MCF 10A (cell line): ENCODE measurements at regions of chr12 and their contacts with region 1.

Region 1: DNA sequence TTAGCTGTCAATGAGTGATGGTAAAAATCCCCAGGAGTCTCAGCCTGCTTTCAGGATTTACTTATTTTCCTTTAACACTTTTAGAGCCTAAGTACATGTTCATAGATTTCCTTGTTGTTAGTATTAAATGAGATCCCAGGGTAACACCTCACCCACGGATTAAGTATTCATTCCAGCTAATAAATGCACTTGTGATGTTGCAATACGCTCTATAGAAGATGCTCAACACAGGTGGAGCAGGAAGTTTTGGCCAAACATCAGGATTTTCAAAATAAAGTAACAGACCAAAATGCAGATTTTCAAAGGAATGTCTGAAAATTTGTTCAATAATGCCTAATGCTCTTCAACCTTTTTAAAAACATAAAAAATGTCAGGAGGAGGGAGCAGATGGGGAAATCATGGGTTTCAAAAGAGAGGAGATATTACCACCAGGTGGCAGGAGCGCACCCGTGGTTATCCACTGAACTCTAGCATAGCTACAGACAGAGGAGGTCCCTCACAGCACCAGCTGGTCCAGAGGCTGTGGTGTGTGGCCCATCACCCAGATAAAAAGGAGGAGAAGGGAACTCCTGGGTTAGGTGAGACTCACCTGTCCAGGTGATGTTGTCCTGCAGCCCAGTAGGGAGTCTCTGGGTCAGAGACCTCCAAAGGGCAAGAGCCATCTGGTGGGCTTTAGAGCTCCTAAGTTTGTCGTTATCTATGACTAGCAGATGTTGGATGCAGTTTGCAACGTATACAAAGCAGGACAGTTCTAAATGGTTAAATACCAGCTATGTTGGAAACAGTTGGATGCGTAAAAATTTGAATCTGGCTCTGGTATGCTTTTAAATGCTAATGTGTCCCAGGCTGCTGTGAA is 1158.4 kb upstream of the TMEM132C start:
- DNase-seq: peak; percentile 81
- H3K4me3 Mint-ChIP-seq: no peak overlapping the region
- H3K27ac Mint-ChIP-seq: peak overlapping the region; percentile 59
- H3K4me1 Mint-ChIP-seq: peaks cover 22% of the 10 kb centered on the region
- H3K27me3 Mint-ChIP-seq: no peaks in the 10 kb centered on the region
- CTCF ChIP-seq: peak; percentile 75

Region 2: GRCh38 chr12:127119600-127120140 is 11.1 kb after region 1 on chr12:
- CTCF ChIA-PET with region 1: interaction called, 32 read pairs
- POLR2A ChIA-PET with region 1: no interaction called
- intact Hi-C with region 1: no loop called
- DNase-seq: no peak
- H3K4me3 Mint-ChIP-seq: no peak overlapping the region
- H3K27ac Mint-ChIP-seq: no peak overlapping the region
- H3K4me1 Mint-ChIP-seq: peaks cover 22% of the 10 kb centered on the region
- H3K27me3 Mint-ChIP-seq: no peaks in the 10 kb centered on the region
- CTCF ChIP-seq: no peak

Region 3: DNA sequence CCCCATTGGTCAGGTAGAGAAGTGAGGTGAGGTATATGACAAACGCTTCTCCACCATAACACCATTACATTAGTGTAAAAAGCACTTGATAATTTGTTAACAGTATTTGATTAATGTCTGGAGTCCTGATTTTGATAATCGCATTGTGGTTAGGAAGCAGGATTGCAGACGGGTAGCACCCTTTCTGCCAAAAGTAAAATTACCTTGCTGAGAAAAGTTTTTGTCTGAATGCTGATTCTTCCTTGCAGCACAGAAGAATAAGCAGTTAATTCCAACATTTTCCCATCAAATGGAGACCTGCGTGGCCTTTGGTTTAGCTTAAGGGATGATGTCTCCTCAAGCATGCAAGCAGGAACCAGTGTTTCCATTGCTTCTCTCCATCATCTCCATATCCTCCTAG is 68.2 kb after region 1 on chr12:
- CTCF ChIA-PET with region 1: no interaction called
- POLR2A ChIA-PET with region 1: no interaction called
- intact Hi-C with region 1: no loop called
- DNase-seq: no peak
- H3K4me3 Mint-ChIP-seq: no peak overlapping the region
- H3K27ac Mint-ChIP-seq: no peak overlapping the region
- H3K4me1 Mint-ChIP-seq: peaks cover 5% of the 10 kb centered on the region
- H3K27me3 Mint-ChIP-seq: no peaks in the 10 kb centered on the region
- CTCF ChIP-seq: no peak

Region 4: GRCh38 chr12:127230843-127231260 is 122.3 kb after region 1 on chr12:
- CTCF ChIA-PET with region 1: interaction called, 4 read pairs
- POLR2A ChIA-PET with region 1: no interaction called
- intact Hi-C with region 1: loop called (anchors 5 kb)
- DNase-seq: peak; percentile 91
- H3K4me3 Mint-ChIP-seq: no peak overlapping the region
- H3K27ac Mint-ChIP-seq: peak overlapping the region; percentile 80
- H3K4me1 Mint-ChIP-seq: peaks cover 12% of the 10 kb centered on the region
- H3K27me3 Mint-ChIP-seq: no peaks in the 10 kb centered on the region
- CTCF ChIP-seq: no peak

Region 5: DNA sequence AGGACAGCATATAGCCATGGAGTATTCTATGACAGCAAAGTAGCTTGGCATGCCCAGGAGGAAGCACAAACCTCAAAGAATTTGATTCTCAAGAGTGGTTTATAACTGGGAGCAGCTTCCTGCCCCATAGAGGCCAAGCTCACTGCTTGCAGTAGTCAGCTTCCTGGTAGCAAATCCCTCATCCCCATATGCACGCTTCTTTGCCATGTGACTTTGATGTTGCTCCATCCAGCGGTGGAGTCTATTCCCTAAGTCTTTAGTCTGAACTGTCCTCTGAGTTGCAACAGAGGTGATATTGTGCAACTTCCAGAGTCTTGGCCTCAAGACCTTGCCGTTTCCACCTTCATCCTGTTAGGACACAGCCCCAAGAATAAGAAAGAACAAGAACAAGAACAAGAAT is 161.6 kb after region 1 on chr12:
- CTCF ChIA-PET with region 1: interaction called, 7 read pairs
- POLR2A ChIA-PET with region 1: no interaction called
- intact Hi-C with region 1: loop called (anchors 5 kb)
- DNase-seq: peak; percentile 98
- H3K4me3 Mint-ChIP-seq: peak overlapping the region; percentile 1
- H3K27ac Mint-ChIP-seq: peak overlapping the region; percentile 1
- H3K4me1 Mint-ChIP-seq: peaks cover 27% of the 10 kb centered on the region
- H3K27me3 Mint-ChIP-seq: no peaks in the 10 kb centered on the region
- CTCF ChIP-seq: no peak

Region 6: GRCh38 chr12:127363392-127363791 is 254.8 kb after region 1 on chr12:
- CTCF ChIA-PET with region 1: interaction called, 16 read pairs
- POLR2A ChIA-PET with region 1: interaction called, 3 read pairs
- intact Hi-C with region 1: loop called (anchors 5 kb)
- DNase-seq: peak; percentile 45
- H3K4me3 Mint-ChIP-seq: no peak overlapping the region
- H3K27ac Mint-ChIP-seq: no peak overlapping the region
- H3K4me1 Mint-ChIP-seq: no peaks in the 10 kb centered on the region
- H3K27me3 Mint-ChIP-seq: no peaks in the 10 kb centered on the region
- CTCF ChIP-seq: peak; percentile 24